Natural killer cell (primary cell): ENCODE measurements at regions of chr3 and their contacts with region 1.

Region 1: GRCh38 chr3:52291508-52292181 is 4.0 kb downstream of the GLYCTK start:
- DNase-seq: peak; percentile 40 to 67
- ATAC-seq: no peak
- H3K4me3 ChIP-seq: no peak overlapping the region
- H3K4me3 Mint-ChIP-seq: peak overlapping the region; percentile 45
- H3K27ac ChIP-seq: no peak overlapping the region
- H3K27ac Mint-ChIP-seq: peak overlapping the region; percentile 59 to 65
- H3K4me1 ChIP-seq: peaks cover 41% of the 10 kb centered on the region
- H3K4me1 Mint-ChIP-seq: peaks cover 29 to 50% of the 10 kb centered on the region in 2 donors
- H3K27me3 ChIP-seq: no peaks in the 10 kb centered on the region
- H3K27me3 Mint-ChIP-seq: no peaks in the 10 kb centered on the region
- CTCF ChIP-seq: peak; percentile 56

Region 2: DNA sequence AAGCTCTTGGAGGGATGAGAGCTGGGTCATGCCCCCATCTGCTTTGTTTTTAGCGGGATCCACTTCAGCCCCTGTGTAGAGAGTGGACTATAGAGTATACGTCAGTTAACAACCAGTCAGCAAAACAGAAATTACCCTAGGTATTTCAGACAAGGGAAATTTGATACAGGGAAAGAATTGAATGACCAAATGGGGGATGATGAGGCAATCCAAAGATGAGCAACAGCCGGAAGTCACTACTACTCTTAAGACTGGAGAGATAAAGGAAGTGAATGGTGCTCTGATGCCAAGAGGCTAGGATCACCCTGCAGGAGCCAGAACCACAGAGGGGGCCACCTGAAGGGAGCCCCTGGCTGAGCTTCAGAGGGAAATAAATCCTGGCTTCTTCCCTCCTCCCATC is 338.2 kb before region 1 on chr3:
- intact Hi-C with region 1: no loop called
- DNase-seq: no peak
- ATAC-seq: no peak
- H3K4me3 ChIP-seq: no peak overlapping the region
- H3K4me3 Mint-ChIP-seq: no peak overlapping the region
- H3K27ac ChIP-seq: no peak overlapping the region
- H3K27ac Mint-ChIP-seq: no peak overlapping the region
- H3K4me1 ChIP-seq: peaks cover 15% of the 10 kb centered on the region
- H3K4me1 Mint-ChIP-seq: peaks cover 0 to 14% of the 10 kb centered on the region in 2 donors
- H3K27me3 ChIP-seq: peaks cover 22% of the 10 kb centered on the region
- H3K27me3 Mint-ChIP-seq: peaks cover 23 to 35% of the 10 kb centered on the region in 2 donors
- CTCF ChIP-seq: no peak

Region 3: DNA sequence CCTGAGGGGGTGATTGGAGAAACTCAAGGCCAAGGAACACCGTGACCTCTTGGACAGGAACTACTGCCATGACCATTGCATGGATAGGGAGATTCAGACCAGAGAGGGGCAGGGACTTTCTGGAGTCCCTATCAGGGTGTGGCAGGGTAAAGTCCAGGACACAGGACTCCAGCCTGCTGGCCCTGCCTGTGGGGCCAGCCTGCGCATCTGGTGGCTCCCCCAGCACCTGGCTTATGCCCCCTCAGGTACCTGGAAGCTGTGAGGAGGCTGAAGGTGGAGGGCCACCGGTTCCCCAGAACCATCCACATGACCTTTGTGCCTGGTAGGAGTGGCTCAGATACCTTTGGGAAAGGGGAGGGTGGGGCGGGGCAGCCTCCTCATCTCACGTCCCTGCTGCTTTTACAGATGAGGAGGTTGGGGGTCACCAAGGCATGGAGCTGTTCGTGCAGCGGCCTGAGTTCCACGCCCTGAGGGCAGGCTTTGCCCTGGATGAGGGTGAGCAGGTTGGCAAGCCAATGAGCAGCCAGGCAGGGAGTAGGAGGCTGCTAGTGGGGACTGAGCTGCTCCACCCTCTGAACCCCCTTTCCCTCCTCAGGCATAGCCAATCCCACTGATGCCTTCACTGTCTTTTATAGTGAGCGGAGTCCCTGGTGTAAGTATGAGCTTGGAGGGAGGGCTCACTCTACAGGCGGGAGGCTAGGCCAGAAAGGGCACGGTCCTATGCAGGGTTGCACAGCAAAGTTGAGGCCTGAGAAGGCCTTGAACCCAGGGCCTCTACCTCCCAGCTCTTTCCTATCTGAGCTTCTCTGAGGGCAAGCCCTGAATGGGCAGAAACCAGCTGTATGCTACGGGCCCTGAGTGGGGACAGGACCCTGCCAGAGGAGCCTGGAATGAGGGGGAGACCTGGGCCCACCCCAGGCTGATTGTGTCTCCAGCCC is 305.4 kb before region 1 on chr3:
- intact Hi-C with region 1: no loop called
- DNase-seq: no peak
- ATAC-seq: no peak
- H3K4me3 ChIP-seq: no peak overlapping the region
- H3K4me3 Mint-ChIP-seq: no peak overlapping the region
- H3K27ac ChIP-seq: no peak overlapping the region
- H3K27ac Mint-ChIP-seq: no peak overlapping the region
- H3K4me1 ChIP-seq: peaks cover 26% of the 10 kb centered on the region
- H3K4me1 Mint-ChIP-seq: peaks cover 14 to 31% of the 10 kb centered on the region in 2 donors
- H3K27me3 ChIP-seq: no peaks in the 10 kb centered on the region
- H3K27me3 Mint-ChIP-seq: no peaks in the 10 kb centered on the region
- CTCF ChIP-seq: no peak

Region 4: GRCh38 chr3:52238761-52239701 is 52.6 kb before region 1 on chr3 and contains the start of gene TWF2:
- intact Hi-C with region 1: loop called (anchors 1 kb)
- DNase-seq: peak; percentile 84 to 94
- ATAC-seq: peak; percentile 89 to 95 (median 92)
- H3K4me3 ChIP-seq: peak within 1 kb of the TSS; percentile 98
- H3K4me3 Mint-ChIP-seq: peak within 1 kb of the TSS; percentile 95
- H3K27ac ChIP-seq: peak within 1 kb of the TSS; percentile 78
- H3K27ac Mint-ChIP-seq: peak within 1 kb of the TSS; percentile 87 to 91
- H3K4me1 ChIP-seq: peaks cover 68% of the 10 kb centered on the region
- H3K4me1 Mint-ChIP-seq: peaks cover 31 to 61% of the 10 kb centered on the region in 2 donors
- H3K27me3 ChIP-seq: no peaks in the 10 kb centered on the region
- H3K27me3 Mint-ChIP-seq: no peaks in the 10 kb centered on the region
- CTCF ChIP-seq: peak; percentile 54
- total RNA-seq, gene TWF2: 49.2 to 76.6 (median 52.0) TPM

Region 5: GRCh38 chr3:52313774-52314188 is 22.1 kb after region 1 on chr3:
- intact Hi-C with region 1: loop called (anchors 1 kb)
- DNase-seq: no peak
- ATAC-seq: no peak
- H3K4me3 ChIP-seq: no peak overlapping the region
- H3K4me3 Mint-ChIP-seq: no peak overlapping the region
- H3K27ac ChIP-seq: peak overlapping the region; percentile 55
- H3K27ac Mint-ChIP-seq: peak overlapping the region in 1 of 2 donors; percentile 92
- H3K4me1 ChIP-seq: peaks cover 61% of the 10 kb centered on the region
- H3K4me1 Mint-ChIP-seq: peaks cover 24 to 62% of the 10 kb centered on the region in 2 donors
- H3K27me3 ChIP-seq: no peaks in the 10 kb centered on the region
- H3K27me3 Mint-ChIP-seq: no peaks in the 10 kb centered on the region
- CTCF ChIP-seq: no peak